Right cardiac atrium (tissue), 5 donors: ENCODE measurements at regions of chr2 and their contacts with region 1.

Region 1: GRCh38 chr2:1910592-1911246 is 166.4 kb upstream of the PXDN start:
- DNase-seq: no peak
- ATAC-seq: no peak
- H3K4me3 ChIP-seq: no peak overlapping the region
- H3K27ac ChIP-seq: no peak overlapping the region
- H3K4me1 ChIP-seq: no peaks in the 10 kb centered on the region
- H3K27me3 ChIP-seq: no peaks in the 10 kb centered on the region

Region 2: GRCh38 chr2:2095360-2096093 is 184.8 kb after region 1 on chr2:
- intact Hi-C with region 1: loop called in 1 of 4 experiments (anchors 10 kb)
- DNase-seq: no peak
- ATAC-seq: no peak
- H3K4me3 ChIP-seq: no peak overlapping the region
- H3K27ac ChIP-seq: no peak overlapping the region
- H3K4me1 ChIP-seq: no peaks in the 10 kb centered on the region
- H3K27me3 ChIP-seq: no peaks in the 10 kb centered on the region